ENCODE measurements at regions of chr2 and their contacts with region 1.

Region 1: DNA sequence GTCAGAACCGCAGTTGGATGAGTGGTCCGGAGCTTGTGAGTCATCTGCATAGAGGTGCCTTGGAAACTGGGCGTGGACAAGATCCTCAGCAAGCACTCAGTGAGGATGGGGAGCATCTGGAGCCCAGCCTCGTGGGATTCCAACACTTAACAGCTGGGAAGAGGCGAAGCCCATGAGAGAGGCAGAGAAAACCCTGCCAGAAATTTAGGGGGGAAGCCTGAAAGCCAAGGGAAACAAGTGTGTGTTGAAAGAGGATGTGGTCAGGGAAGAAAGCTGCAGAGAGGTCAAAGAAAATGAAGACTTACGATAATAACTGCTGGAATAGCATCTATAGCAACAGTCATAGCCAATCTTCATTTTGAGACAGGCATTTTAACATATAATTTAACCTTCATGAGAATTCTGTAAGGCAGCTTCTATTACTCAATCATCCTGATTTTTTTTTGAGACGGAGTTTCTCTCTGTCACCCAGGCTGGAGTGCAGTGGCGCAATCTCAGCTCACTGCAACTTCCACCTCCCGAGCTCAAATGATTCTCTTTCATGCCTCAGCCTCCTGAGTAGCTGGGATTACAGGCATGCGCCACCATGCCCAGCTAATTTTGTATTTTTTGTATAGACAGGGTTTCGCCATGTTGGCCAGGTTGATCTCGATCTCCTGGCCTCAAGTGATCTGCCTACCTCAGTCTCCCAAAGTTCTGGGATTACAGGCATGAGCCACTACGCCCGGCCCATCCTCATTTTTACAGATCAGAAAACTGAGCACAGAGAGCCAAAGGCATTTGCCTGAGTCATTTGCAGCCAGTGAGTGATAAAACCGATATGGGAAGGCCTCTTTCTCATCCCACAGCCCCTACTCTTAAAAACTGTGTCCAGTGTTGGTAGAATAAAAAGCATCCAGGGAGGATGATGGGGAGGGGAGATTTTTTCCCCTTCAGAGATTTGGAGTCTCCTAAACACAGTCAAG is 214.4 kb upstream of the EPAS1 start:
- DNase-seq: peak; percentile 80

Region 2: GRCh38 chr2:45567974-45568789 is 514.6 kb before region 1 on chr2:
- intact Hi-C with region 1: no loop called
- DNase-seq: no peak

Region 3: DNA sequence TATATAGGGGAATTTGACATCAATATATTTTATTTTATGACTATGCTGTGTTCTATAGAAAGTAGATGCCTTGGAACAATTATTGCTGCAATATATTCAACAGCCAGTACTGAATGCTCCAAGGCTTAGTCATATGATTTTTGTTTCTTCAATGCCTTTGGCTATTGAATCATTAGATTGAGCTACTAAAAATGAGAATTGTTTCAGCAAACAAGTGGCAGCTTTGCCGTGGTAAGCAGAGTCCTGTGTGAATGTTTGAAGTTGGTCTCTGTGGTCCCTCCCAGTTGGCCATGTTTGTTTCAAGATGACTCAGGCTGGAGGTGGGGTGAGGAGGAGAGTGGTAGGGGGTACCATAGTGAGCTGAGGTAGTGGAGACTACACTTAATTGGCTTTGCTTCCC is 15.8 kb after region 1 on chr2:
- intact Hi-C with region 1: no loop called
- DNase-seq: no peak

Region 4: GRCh38 chr2:46122318-46122976 is 39.6 kb after region 1 on chr2:
- intact Hi-C with region 1: loop called (anchors 5 kb)
- DNase-seq: no peak

Measured in cardiac septum (tissue), 1 donor.